ENCODE measurements at regions of chr3 and their contacts with region 1.

Region 1: DNA sequence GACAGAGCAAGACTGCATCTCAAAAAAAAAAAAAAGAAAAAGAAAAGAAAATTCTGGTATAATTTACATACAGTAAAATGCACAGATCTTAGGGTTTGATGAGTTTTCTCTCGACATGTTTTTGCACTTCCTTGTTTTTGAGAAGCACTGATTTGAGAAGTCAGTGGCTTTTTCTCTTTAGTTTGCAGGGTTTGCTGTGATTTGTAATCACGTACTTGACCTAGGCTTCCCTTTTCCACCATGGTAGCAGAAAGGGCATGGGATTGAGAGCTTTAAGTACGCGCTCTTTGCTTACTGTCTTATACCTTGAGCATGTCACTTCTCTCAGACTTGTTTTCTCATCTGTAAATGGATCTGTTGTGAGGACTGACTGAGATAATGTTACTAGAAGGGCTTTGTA is 4.1 kb downstream of the VHL start:
- DNase-seq: no peak
- H3K27ac ChIP-seq: no peak overlapping the region
- CTCF ChIP-seq: no peak

Region 2: GRCh38 chr3:10709110-10709781 is 563.6 kb after region 1 on chr3:
- CTCF ChIA-PET with region 1: no interaction called
- POLR2A ChIA-PET with region 1: interaction called, 10 read pairs
- DNase-seq: no peak
- H3K27ac ChIP-seq: no peak overlapping the region
- CTCF ChIP-seq: no peak